A673 (cell line): ENCODE measurements at regions of chr4 and their contacts with region 1.

Region 1: GRCh38 chr4:77203380-77204197 is 46.6 kb downstream of the CCNG2 start:
- DNase-seq: peak; percentile 74
- H3K4me3 ChIP-seq: no peak overlapping the region
- H3K27ac ChIP-seq: no peak overlapping the region
- H3K4me1 ChIP-seq: no peaks in the 10 kb centered on the region
- H3K27me3 ChIP-seq: no peaks in the 10 kb centered on the region
- CTCF ChIP-seq: peak; percentile 69

Region 2: GRCh38 chr4:76430519-76431388 is 772.8 kb before region 1 on chr4:
- CTCF ChIA-PET with region 1: no interaction called
- POLR2A ChIA-PET with region 1: no interaction called
- intact Hi-C with region 1: loop called (anchors 5 kb)
- DNase-seq: peak; percentile 59
- H3K4me3 ChIP-seq: no peak overlapping the region
- H3K27ac ChIP-seq: no peak overlapping the region
- H3K4me1 ChIP-seq: no peaks in the 10 kb centered on the region
- H3K27me3 ChIP-seq: no peaks in the 10 kb centered on the region
- CTCF ChIP-seq: peak; percentile 61

Region 3: DNA sequence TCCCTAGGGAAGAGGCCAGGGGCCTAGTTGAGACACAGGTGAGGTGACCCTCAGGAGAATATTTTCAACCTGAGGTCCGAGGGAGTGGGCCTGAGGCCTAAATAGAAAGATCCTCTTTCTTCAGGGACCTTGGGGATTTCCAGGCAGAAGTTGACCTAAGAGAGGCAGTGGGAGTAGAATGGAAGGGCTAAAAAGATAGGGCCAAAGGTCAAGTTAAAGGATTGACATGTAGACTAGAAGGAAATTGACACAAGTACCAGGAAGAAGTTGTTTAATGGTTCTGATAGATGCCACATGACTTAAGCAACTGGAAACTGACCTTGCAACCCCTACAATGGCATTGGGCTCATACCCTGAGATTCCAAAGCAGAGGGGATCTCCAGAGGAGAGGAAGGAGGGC is 691.6 kb before region 1 on chr4:
- CTCF ChIA-PET with region 1: no interaction called
- POLR2A ChIA-PET with region 1: no interaction called
- intact Hi-C with region 1: loop called (anchors 5 kb)
- DNase-seq: no peak
- H3K4me3 ChIP-seq: no peak overlapping the region
- H3K27ac ChIP-seq: no peak overlapping the region
- H3K4me1 ChIP-seq: peaks cover under 1% of the 10 kb centered on the region
- H3K27me3 ChIP-seq: no peaks in the 10 kb centered on the region
- CTCF ChIP-seq: no peak

Region 4: DNA sequence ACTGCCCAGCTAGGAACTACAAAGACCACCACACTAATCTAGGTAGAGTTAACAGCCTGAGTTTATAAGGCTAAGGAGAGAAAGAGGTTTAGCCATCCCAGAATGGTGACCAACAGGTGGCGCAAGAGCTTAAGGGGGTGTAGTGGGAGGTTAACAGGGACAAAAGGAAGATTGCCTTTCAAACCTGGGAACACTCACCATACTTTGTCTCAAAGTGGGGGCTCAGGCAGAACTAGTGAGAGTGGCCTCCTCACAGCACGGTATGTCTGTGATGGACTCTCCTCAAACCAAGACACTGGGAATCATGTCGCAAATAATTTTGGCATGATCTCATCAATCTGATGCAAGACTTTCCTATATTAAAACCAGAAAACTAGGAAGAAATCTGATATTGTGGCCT is 151.2 kb before region 1 on chr4:
- CTCF ChIA-PET with region 1: interaction called, 8 read pairs
- POLR2A ChIA-PET with region 1: no interaction called
- intact Hi-C with region 1: loop called (anchors 2 kb)
- DNase-seq: peak; percentile 42
- H3K4me3 ChIP-seq: no peak overlapping the region
- H3K27ac ChIP-seq: peak overlapping the region; percentile 47
- H3K4me1 ChIP-seq: peaks cover 19% of the 10 kb centered on the region
- H3K27me3 ChIP-seq: no peaks in the 10 kb centered on the region
- CTCF ChIP-seq: peak; percentile 49

Region 5: GRCh38 chr4:77082886-77083608 is 120.5 kb before region 1 on chr4:
- CTCF ChIA-PET with region 1: no interaction called
- POLR2A ChIA-PET with region 1: no interaction called
- intact Hi-C with region 1: no loop called
- DNase-seq: no peak
- H3K4me3 ChIP-seq: no peak overlapping the region
- H3K27ac ChIP-seq: no peak overlapping the region
- H3K4me1 ChIP-seq: no peaks in the 10 kb centered on the region
- H3K27me3 ChIP-seq: no peaks in the 10 kb centered on the region
- CTCF ChIP-seq: no peak

Region 6: GRCh38 chr4:77095101-77095821 is 108.3 kb before region 1 on chr4:
- CTCF ChIA-PET with region 1: interaction called, 8 read pairs
- POLR2A ChIA-PET with region 1: no interaction called
- intact Hi-C with region 1: loop called (anchors 2 kb)
- DNase-seq: peak; percentile 53
- H3K4me3 ChIP-seq: no peak overlapping the region
- H3K27ac ChIP-seq: no peak overlapping the region
- H3K4me1 ChIP-seq: no peaks in the 10 kb centered on the region
- H3K27me3 ChIP-seq: no peaks in the 10 kb centered on the region
- CTCF ChIP-seq: peak; percentile 72

Region 7: GRCh38 chr4:77308843-77309242 is 105.3 kb after region 1 on chr4:
- CTCF ChIA-PET with region 1: no interaction called
- POLR2A ChIA-PET with region 1: no interaction called
- intact Hi-C with region 1: no loop called
- DNase-seq: peak; percentile 25
- H3K4me3 ChIP-seq: no peak overlapping the region
- H3K27ac ChIP-seq: no peak overlapping the region
- H3K4me1 ChIP-seq: no peaks in the 10 kb centered on the region
- H3K27me3 ChIP-seq: no peaks in the 10 kb centered on the region
- CTCF ChIP-seq: peak; percentile 44